ENCODE measurements at regions of chr12 and their contacts with region 1.

Region 1: GRCh38 chr12:42237052-42237852 is 796 bp downstream of the YAF2 start:
- DNase-seq: peak; percentile 61 to 77 (median 72)
- H3K4me3 ChIP-seq: peak overlapping the region; percentile 64
- H3K27ac ChIP-seq: peak overlapping the region; percentile 90 to 91
- H3K4me1 ChIP-seq: peaks cover 5% of the 10 kb centered on the region
- H3K27me3 ChIP-seq: no peaks in the 10 kb centered on the region
- CTCF ChIP-seq: peak in 2 of 3 donors; percentile 37 to 48
- EP300 ChIP-seq: no peak
- POLR2A ChIP-seq: no peak

Region 2: GRCh38 chr12:42325653-42326474 is 88.6 kb after region 1 on chr12 and contains the starts of genes PPHLN1 and ZCRB1:
- intact Hi-C with region 1: loop called in 2 of 4 experiments (anchors 10 kb)
- DNase-seq: peak; percentile 85 to 92 (median 87)
- H3K4me3 ChIP-seq: peak within 1 kb of the TSS; percentile 59
- H3K27ac ChIP-seq: peak within 1 kb of the TSS; percentile 67 to 86
- H3K4me1 ChIP-seq: peaks cover 7% of the 10 kb centered on the region
- H3K27me3 ChIP-seq: no peaks in the 10 kb centered on the region
- CTCF ChIP-seq: no peak
- EP300 ChIP-seq: no peak
- POLR2A ChIP-seq: peak; percentile 71
- total RNA-seq, gene PPHLN1: 42.0 to 68.9 (median 53.8) TPM
- total RNA-seq, gene ZCRB1: 26.5 to 50.9 (median 41.5) TPM

Region 3: DNA sequence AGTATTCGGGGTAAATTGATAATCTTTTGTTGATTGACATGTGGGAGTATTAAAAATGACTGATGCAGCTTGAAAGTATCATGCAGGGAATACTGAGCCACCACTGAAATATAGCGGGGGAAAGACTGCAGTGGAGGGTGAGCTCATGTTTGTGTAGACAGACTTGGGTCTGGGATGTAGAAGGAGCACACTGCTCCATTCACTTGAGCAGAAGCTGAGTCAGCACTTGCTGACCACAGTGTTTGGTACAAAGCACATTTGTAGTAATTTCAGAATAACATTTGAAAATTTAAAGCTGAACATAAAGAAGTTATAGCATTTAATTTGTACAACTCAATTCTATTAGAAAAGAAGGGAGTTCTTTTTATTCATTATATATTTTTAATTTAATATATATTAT is 656.5 kb after region 1 on chr12:
- intact Hi-C with region 1: no loop called
- DNase-seq: no peak
- H3K4me3 ChIP-seq: no peak overlapping the region
- H3K27ac ChIP-seq: no peak overlapping the region
- H3K4me1 ChIP-seq: no peaks in the 10 kb centered on the region
- H3K27me3 ChIP-seq: no peaks in the 10 kb centered on the region
- CTCF ChIP-seq: no peak
- EP300 ChIP-seq: no peak
- POLR2A ChIP-seq: no peak

Measured in ovary (tissue), 10 donors.